PC-9 (cell line): ENCODE measurements at regions of chr11 and their contacts with region 1.

Region 1: GRCh38 chr11:1041936-1042608 is 5.6 kb upstream of the MUC6 start:
- DNase-seq: peak; percentile 49
- H3K4me3 ChIP-seq: peak overlapping the region; percentile 18; the same call in 1 of the 2 replicates
- H3K27ac ChIP-seq: peak overlapping the region; percentile 59; the same call in 1 of the 2 replicates
- H3K4me1 ChIP-seq: peaks cover 34% of the 10 kb centered on the region
- H3K27me3 ChIP-seq: no peaks in the 10 kb centered on the region
- CTCF ChIP-seq: no peak

Region 2: DNA sequence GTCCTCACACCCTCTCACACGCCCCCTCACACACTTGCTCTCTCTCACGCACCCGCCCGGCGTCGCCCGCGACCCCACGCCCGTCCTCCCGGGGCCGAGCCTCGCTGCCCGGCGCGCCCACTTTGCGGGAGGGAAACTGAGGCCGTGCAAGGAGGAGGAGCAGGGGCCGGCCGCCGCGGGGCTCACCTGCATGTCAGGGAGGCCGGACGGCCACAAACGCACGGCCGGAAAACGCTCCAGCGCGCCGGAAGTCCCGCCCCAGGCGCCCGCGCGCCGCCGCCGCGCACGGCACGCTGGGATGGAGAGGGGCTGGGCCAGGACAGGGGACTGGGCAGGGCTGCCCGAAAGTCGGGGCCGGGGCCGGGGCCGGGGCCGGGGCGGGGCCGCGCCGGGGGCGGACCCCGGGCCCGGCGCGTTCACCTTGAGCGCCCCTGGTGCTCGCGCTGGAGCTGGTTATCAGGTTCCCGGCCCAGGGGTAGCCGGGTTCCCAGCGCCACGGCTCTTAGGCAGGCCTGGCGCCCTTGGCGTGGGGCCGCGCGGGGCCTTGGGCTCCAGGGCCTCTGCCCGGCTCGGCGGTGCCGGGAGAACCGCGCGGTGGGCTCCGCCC is 131.4 kb before region 1 on chr11 and contains the start of gene CHID1:
- CTCF ChIA-PET with region 1: interaction called, 3 read pairs
- POLR2A ChIA-PET with region 1: interaction called, 6 read pairs
- intact Hi-C with region 1: loop called (anchors 5 kb)
- DNase-seq: peak; percentile 66 to 88
- H3K4me3 ChIP-seq: peak within 1 kb of the TSS; percentile 78
- H3K27ac ChIP-seq: peak within 1 kb of the TSS; percentile 68
- H3K4me1 ChIP-seq: peaks cover 11% of the 10 kb centered on the region
- H3K27me3 ChIP-seq: no peaks in the 10 kb centered on the region
- CTCF ChIP-seq: no peak
- total RNA-seq, gene CHID1: 66.1 and 85.6 TPM in 2 replicates

Region 3: GRCh38 chr11:1382831-1383607 is 340.9 kb after region 1 on chr11:
- CTCF ChIA-PET with region 1: no interaction called
- POLR2A ChIA-PET with region 1: no interaction called
- intact Hi-C with region 1: no loop called
- DNase-seq: peak in 1 of 2 experiments; percentile 63
- H3K4me3 ChIP-seq: peak overlapping the region; percentile 52
- H3K27ac ChIP-seq: no peak overlapping the region
- H3K4me1 ChIP-seq: no peaks in the 10 kb centered on the region
- H3K27me3 ChIP-seq: peaks cover 8% of the 10 kb centered on the region; the same call in 1 of the 2 replicates
- CTCF ChIP-seq: no peak